HEK293 (cell line): ENCODE measurements at regions of chr6 and their contacts with region 1.

Region 1: GRCh38 chr6:148479497-148479896 is 136.9 kb downstream of the SASH1 start:
- H3K4me3 ChIP-seq: no peak overlapping the region
- H3K27ac ChIP-seq: no peak overlapping the region
- H3K4me1 ChIP-seq: no peaks in the 10 kb centered on the region
- CTCF ChIP-seq: no peak

Region 2: DNA sequence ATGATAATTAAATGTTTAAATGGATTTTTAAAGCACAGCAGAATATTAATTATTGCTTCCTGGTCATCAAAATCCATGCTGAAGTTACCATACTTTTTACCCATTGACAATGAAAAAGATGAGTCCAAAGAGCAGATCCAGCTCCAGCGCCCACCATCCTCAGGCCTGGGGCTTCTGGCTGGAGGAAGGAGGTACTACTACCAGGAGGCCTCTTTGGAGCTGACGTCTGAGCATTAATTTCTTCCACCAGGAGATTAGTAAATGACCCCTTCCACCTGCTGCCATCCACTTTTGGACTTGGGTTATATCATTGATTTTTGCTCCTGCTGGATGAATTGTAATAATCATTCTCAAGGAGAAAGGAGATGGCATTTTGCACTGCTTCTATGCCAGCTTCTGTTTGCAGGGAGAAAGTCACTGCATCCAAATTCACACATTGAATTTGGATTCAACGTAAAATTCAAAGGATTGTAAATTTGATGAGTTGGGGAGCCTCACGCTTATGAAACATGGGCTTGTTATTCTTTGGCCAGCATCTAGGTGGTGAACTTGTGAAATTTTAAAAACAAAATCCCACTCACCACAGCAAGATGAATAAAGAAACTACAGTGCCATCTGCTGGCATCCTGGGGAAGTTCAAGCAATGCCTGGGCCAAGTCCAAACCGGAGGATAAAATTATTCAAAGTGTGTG is 15.0 kb before region 1 on chr6:
- CTCF ChIA-PET with region 1: interaction called, 16 read pairs
- POLR2A ChIA-PET with region 1: no interaction called
- H3K4me3 ChIP-seq: no peak overlapping the region
- H3K27ac ChIP-seq: no peak overlapping the region
- H3K4me1 ChIP-seq: no peaks in the 10 kb centered on the region; the same call in 1 of the 2 replicates
- CTCF ChIP-seq: peak; percentile 73

Region 3: GRCh38 chr6:148565930-148566663 is 86.6 kb after region 1 on chr6:
- CTCF ChIA-PET with region 1: no interaction called
- POLR2A ChIA-PET with region 1: no interaction called
- H3K4me3 ChIP-seq: no peak overlapping the region
- H3K27ac ChIP-seq: no peak overlapping the region
- H3K4me1 ChIP-seq: no peaks in the 10 kb centered on the region
- CTCF ChIP-seq: no peak